Ascending aorta (tissue), 2 donors: ENCODE measurements at regions of chr16 and their contacts with region 1.

Region 1: DNA sequence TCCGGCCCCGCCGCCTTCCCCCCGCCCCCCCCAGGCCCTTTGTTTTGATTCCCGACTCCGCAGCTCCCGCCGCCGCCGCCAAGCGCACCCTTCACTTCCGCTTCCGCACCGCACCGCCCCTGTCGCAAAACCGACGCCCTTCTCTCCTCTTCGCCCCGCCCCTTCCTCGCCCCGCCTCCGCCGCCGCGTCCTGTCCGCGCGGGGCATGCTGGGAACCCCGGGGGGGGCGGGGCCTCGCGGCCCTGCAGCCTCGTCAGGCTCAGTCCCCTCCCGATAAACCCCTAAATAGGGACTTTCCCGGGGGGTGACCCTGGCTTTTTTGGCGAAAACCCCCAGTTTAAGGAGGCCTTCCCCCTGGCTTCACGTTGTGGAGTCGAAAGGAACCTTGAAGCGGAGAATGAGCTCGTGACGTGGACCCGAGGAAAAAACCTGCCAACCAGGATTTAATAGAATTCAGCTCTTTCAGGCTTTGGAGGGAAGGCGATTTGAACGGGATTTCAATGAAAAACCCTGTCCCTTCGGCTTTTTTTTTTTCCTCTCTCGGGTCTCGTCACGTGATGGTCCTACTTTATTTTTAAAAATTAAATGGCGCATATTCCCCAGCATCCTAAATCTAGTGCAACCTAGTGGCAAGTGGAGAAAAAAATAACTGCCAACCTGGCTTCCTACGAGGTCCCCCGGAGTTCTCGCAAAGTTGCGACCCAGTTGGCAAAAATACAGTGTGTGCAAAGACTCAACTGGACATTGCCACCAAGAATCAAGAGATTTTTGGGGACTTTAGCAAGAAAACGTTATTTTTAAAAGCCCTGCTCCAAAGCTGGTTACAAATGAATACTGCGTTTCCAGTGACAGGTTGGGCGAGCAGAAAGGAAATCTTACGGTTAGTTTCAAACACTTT is at the start of gene MARF1:
- DNase-seq: peak; percentile 83 to 98
- H3K4me3 ChIP-seq: peak within 1 kb of the TSS; percentile 92 to 96
- H3K27ac ChIP-seq: peak within 1 kb of the TSS; percentile 98
- H3K4me1 ChIP-seq: peaks cover 0 to 12% of the 10 kb centered on the region in 2 donors
- H3K27me3 ChIP-seq: no peaks in the 10 kb centered on the region
- CTCF ChIP-seq: peak in 2 of 3 experiments; percentile 42 to 65
- total RNA-seq, gene MARF1: 16.0 TPM

Region 2: DNA sequence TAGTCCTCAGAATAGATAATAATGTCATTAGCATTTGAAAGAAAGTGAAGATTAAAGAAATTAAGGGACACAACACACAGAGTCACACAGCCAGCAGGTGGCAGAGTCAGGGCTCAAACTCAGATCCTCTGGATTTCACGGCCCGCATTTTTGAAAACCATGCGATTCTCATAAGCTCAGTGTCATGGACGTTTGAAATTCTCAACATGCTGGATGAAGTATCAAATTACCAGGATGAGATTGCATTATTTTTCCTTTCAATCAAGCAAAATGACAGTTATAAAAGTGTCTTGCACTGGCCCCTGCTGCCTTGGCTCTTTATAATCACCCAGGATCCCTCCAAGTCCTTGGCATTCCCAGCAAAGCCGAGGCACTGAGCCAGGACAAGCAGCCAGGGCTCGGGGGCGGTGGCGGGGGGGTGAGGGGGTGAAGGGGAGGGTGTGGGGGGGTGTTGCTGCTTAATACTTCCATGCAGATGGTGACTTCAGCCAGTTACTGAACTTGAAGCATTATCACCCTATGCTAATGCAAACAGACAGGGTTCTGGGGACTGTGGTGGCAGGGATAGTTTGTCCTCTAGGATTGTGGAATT is 215.6 kb before region 1 on chr16:
- intact Hi-C with region 1: loop called (anchors 2 kb)
- DNase-seq: peak in 1 of 2 donors; percentile 86
- H3K4me3 ChIP-seq: peak overlapping the region in 1 of 2 donors; percentile 40
- H3K27ac ChIP-seq: no peak overlapping the region
- H3K4me1 ChIP-seq: no peaks in the 10 kb centered on the region
- H3K27me3 ChIP-seq: no peaks in the 10 kb centered on the region
- CTCF ChIP-seq: peak; percentile 65 to 79 (median 70)

Region 3: DNA sequence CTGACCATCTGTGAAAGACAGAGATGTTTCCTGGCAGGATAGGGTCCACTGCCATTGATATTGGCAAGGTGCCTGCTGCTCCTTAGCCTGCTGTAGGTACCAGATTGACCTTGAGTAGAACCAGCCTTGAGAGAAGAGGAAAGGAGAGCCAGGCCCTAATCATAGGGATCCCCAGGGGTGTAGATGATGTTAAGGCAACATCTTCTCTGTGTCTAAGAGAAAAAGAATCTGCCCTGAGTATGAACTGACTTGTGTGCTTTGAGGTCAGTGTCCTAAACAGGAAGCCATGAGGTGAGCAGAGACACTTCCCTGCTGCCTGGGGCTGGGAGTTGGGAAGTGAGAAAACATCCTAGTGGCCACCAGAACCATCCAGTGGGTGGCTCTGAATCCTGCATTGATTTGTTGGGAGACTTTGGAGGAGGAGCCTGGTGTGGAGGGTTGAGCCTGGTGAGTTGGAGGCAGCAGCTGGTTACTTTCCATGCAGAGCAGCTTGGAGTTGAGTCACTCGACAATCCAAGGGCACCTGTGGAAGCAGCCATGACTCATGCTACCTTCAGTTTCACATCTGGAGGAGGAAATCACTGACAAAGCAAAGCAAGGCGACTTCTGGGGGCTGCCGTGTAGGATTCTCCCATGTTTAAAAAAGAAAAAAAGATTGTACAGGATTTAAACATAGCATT is 161.1 kb before region 1 on chr16:
- intact Hi-C with region 1: no loop called
- DNase-seq: peak in 1 of 2 donors; percentile 74
- H3K4me3 ChIP-seq: no peak overlapping the region
- H3K27ac ChIP-seq: peak overlapping the region; percentile 1 to 20
- H3K4me1 ChIP-seq: no peaks in the 10 kb centered on the region
- H3K27me3 ChIP-seq: no peaks in the 10 kb centered on the region
- CTCF ChIP-seq: no peak

Region 4: DNA sequence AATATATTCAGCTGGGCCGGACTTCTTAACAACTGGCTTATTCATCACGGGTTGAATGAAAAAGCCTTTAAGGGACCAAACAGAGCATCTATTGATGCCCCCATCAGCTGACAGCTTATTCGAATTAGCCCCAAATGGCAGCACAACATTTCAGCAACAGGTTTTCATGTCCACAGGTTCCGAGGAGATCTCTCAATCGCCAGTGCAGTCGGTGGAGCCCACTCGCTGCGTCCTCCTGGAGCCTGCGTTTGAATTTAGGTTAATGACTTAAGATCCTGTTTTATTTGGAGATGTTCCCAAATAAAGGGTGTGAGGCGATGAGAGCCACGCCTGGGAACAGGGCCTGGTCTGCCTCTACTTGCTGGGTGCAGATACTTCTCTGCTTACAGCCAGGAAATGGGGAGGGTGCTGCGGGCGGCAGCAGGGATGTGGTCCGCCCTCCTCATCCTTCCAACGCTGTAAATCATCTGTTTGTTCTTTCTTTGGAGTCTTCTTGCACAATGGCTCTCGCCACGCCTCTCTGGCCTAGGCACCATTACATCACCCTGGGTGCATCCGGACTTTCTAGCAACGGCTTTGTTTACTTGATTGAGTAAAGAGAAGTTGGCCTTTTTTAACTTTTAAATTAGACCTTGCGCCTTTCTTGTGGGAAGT is 29.3 kb after region 1 on chr16:
- intact Hi-C with region 1: loop called (anchors 2 kb)
- DNase-seq: peak; percentile 91 to 97
- H3K4me3 ChIP-seq: peak overlapping the region; percentile 31 to 33
- H3K27ac ChIP-seq: peak overlapping the region; percentile 78 to 92
- H3K4me1 ChIP-seq: peaks cover 6 to 9% of the 10 kb centered on the region in 2 donors
- H3K27me3 ChIP-seq: no peaks in the 10 kb centered on the region
- CTCF ChIP-seq: no peak

Region 5: DNA sequence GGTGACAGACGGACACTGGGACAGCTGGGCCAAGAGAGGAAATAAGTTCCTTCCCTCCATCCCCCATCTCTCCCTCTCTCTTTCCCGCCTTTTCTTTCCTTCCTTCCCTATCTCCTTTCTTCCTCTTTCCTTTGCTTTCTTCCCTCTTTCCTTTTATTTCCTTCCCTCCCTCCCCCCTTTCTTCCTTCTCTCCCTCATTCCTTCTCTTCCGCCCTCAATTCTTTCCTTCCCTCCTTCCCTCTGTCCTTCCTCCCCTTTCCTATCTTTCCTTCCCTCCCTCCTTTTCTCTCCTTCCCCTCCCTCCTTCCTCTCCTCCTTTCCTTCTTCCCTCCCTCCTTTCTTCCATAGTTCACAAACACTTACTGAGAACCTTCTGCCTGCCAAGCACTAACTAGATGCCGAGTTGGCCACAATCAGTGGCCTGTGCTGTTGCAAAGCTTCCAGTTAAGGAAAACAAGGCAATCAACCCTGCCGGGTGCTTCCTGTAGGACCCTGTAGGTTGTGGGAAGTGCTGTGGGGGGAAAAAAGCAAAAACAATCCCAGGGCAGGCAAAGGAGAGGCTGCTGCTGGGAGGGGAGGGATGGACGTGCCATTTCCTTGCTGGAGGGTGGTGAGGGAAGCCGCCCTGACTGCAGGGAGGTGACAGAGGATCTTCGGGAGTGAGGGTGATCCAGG is 548.3 kb after region 1 on chr16:
- intact Hi-C with region 1: loop called (anchors 2 kb)
- DNase-seq: no peak
- H3K4me3 ChIP-seq: no peak overlapping the region
- H3K27ac ChIP-seq: no peak overlapping the region
- H3K4me1 ChIP-seq: no peaks in the 10 kb centered on the region
- H3K27me3 ChIP-seq: no peaks in the 10 kb centered on the region
- CTCF ChIP-seq: no peak